Mucosa of descending colon (tissue), 3 donors: ENCODE measurements at regions of chr10 and their contacts with region 1.

Region 1: GRCh38 chr10:103966671-103967447 is at the start of gene SLK:
- DNase-seq: peak; percentile 85 to 90 (median 88)
- ATAC-seq: peak; percentile 97
- H3K4me3 ChIP-seq: peak within 1 kb of the TSS; percentile 88
- H3K4me1 ChIP-seq: peaks cover 30% of the 10 kb centered on the region
- CTCF ChIP-seq: no peak
- total RNA-seq, gene SLK: 45.7 to 75.8 (median 46.7) TPM

Region 2: GRCh38 chr10:103895411-103896186 is 71.3 kb before region 1 on chr10:
- intact Hi-C with region 1: loop called in 1 of 2 experiments (anchors 10 kb)
- DNase-seq: no peak
- ATAC-seq: peak; percentile 4
- H3K4me3 ChIP-seq: no peak overlapping the region
- H3K4me1 ChIP-seq: peaks cover 15% of the 10 kb centered on the region
- CTCF ChIP-seq: no peak